Naive thymus-derived CD4-positive, alpha-beta T cell (primary cell): ENCODE measurements at regions of chr7 and their contacts with region 1.

Region 1: DNA sequence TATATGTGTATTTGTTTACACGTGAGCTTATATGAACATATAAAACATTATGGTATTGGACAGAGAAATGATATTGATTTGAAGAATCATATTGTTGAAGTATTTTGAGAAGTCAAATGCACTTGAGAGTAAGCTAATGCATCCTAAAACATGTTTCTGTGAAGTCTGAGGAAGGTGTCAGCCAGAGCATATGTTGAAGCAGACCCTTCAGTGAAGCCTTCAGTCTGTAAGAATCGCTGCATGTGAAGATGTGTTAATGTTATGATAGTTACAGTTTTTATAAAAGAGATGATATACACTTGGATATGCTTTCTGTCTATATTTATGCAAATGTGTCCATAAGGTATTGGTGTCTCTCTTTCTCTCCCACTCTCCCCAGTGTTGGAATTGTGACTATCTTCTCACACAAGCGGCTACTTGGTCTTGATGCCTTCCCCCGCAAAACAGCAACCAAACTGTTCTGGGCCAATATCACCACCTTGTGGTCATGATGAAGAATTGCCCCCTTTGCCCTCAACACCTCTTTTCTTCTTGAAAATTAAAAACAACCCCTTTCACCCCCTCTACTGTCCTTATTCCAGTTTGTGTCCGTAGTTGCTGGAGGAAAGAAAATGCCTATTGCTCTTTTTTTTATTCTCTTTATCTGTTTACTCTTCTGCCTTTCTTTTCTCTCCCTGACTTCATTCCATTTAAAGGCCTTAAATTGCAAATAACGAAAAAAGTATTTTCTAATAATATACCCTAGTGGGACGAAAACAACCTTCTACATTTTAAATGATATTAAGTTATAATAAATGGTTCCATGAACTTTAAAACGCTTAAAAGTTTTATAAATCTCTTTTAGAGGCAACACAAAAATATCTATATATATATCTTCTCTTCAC is 64.9 kb downstream of the IKZF1 start:
- DNase-seq: peak in 7 of 9 donors; percentile 72 to 86 (median 81)
- ATAC-seq: peak; percentile 84
- H3K4me3 ChIP-seq: peak overlapping the region; percentile 15
- H3K4me3 Mint-ChIP-seq: peak overlapping the region; percentile 8 to 89 (median 60)
- H3K27ac ChIP-seq: peak overlapping the region; percentile 94
- H3K27ac Mint-ChIP-seq: peak overlapping the region in 6 of 9 donors; percentile 80 to 100 (median 98)
- H3K4me1 ChIP-seq: peaks cover 84 to 96% of the 10 kb centered on the region in 2 donors
- H3K4me1 Mint-ChIP-seq: peaks cover 63 to 99% (median 96%) of the 10 kb centered on the region in 7 donors
- H3K27me3 ChIP-seq: no peaks in the 10 kb centered on the region
- H3K27me3 Mint-ChIP-seq: no peaks in the 10 kb centered on the region

Region 2: GRCh38 chr7:50147951-50148808 is 221.2 kb before region 1 on chr7:
- CTCF ChIA-PET with region 1: interaction called, 11 read pairs
- POLR2A ChIA-PET with region 1: interaction called, 7 read pairs
- intact Hi-C with region 1: loop called in 1 of 2 experiments (anchors 1 kb)
- DNase-seq: peak in 7 of 9 donors; percentile 52 to 83 (median 71)
- ATAC-seq: peak; percentile 91
- H3K4me3 ChIP-seq: no peak overlapping the region
- H3K4me3 Mint-ChIP-seq: peak overlapping the region in 8 of 10 donors; percentile 21 to 60 (median 48)
- H3K27ac ChIP-seq: peak overlapping the region; percentile 72
- H3K27ac Mint-ChIP-seq: peak overlapping the region; percentile 57 to 97 (median 87)
- H3K4me1 ChIP-seq: peaks cover 3 to 14% of the 10 kb centered on the region in 2 donors
- H3K4me1 Mint-ChIP-seq: peaks cover 18 to 63% (median 40%) of the 10 kb centered on the region in 7 donors
- H3K27me3 ChIP-seq: no peaks in the 10 kb centered on the region
- H3K27me3 Mint-ChIP-seq: no peaks in the 10 kb centered on the region

Region 3: GRCh38 chr7:50304158-50304910 is 65.1 kb before region 1 on chr7 and contains the start of gene IKZF1:
- CTCF ChIA-PET with region 1: interaction called, 210 read pairs
- POLR2A ChIA-PET with region 1: interaction called, 2,368 read pairs
- intact Hi-C with region 1: loop called (anchors 1 kb)
- DNase-seq: peak; percentile 38 to 75 (median 58)
- ATAC-seq: peak; percentile 54
- H3K4me3 ChIP-seq: peak within 1 kb of the TSS; percentile 84
- H3K4me3 Mint-ChIP-seq: peak within 1 kb of the TSS; percentile 93 to 100 (median 99)
- H3K27ac ChIP-seq: peak within 1 kb of the TSS; percentile 90
- H3K27ac Mint-ChIP-seq: peak within 1 kb of the TSS; percentile 91 to 100 (median 98)
- H3K4me1 ChIP-seq: peaks cover 13 to 33% of the 10 kb centered on the region in 2 donors
- H3K4me1 Mint-ChIP-seq: peaks cover 37 to 57% (median 53%) of the 10 kb centered on the region in 7 donors
- H3K27me3 ChIP-seq: no peaks in the 10 kb centered on the region
- H3K27me3 Mint-ChIP-seq: peaks cover 0 to 2% (median 0%) of the 10 kb centered on the region in 5 donors
- total RNA-seq, gene IKZF1: 388 to 548 (median 463) TPM

Region 4: DNA sequence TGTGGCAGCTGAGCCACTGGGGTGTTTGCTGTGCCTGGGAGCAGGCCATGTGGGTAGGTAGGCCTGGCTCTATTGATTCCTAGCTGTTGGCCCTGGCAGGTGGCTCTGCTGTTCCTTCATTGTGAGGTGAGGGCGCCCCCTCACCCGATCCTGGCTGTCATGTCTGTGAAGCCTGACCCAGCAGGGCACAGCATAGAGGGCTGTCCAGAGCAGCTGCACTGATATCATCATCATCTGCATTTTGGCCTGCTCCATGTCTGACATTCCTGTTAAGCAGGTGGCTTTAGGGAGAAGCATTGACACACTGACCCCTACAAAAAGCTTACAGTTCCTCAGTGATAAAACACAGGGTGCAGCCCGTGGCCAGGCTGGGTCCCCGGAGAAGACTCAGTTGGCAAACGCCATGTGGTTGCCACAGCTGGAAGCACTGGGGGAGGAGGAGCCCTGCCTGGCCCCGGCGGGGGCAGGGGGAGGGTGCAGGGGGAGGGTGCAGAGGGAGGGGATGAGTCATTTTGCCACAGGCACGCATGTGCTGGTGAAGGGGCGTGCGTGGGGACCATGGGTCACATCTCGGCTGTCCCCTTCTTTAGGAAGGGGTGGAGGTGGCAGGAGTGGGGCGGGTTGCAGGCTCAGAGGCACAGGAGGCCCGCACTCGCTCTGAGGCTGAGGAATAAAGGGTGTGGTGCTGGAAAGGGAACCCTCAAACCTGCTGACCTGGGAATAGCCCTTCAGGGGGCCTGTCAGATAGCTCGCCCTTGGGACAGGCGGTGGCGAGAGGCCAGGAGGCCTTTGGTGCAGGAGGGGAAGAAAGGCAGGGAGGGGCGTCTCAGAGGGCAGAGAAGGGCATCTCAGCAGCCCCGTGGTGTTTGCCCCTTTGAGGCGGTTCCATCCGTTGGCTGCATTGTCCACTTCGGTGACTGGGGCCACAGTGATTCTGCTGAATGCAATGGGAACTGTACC is 33.3 kb before region 1 on chr7:
- CTCF ChIA-PET with region 1: interaction called, 9 read pairs
- POLR2A ChIA-PET with region 1: interaction called, 2,368 read pairs
- intact Hi-C with region 1: loop called (anchors 1 to 2 kb)
- DNase-seq: peak in 6 of 9 donors; percentile 54 to 86 (median 60)
- ATAC-seq: peak; percentile 62
- H3K4me3 ChIP-seq: peak overlapping the region; percentile 29
- H3K4me3 Mint-ChIP-seq: peak overlapping the region in 1 of 10 donors; percentile 90
- H3K27ac ChIP-seq: peak overlapping the region; percentile 93
- H3K27ac Mint-ChIP-seq: no peak overlapping the region
- H3K4me1 ChIP-seq: peaks cover 99% of the 10 kb centered on the region in 2 donors
- H3K4me1 Mint-ChIP-seq: peaks cover 0 to 68% (median 17%) of the 10 kb centered on the region in 7 donors
- H3K27me3 ChIP-seq: no peaks in the 10 kb centered on the region
- H3K27me3 Mint-ChIP-seq: no peaks in the 10 kb centered on the region

Region 5: GRCh38 chr7:50418086-50418515 is 48.7 kb after region 1 on chr7:
- CTCF ChIA-PET with region 1: interaction called, 27 read pairs
- POLR2A ChIA-PET with region 1: interaction called, 4 read pairs
- intact Hi-C with region 1: loop called (anchors 1 to 2 kb)
- DNase-seq: peak; percentile 31 to 68 (median 56)
- ATAC-seq: peak; percentile 91
- H3K4me3 ChIP-seq: no peak overlapping the region
- H3K4me3 Mint-ChIP-seq: no peak overlapping the region
- H3K27ac ChIP-seq: no peak overlapping the region
- H3K27ac Mint-ChIP-seq: peak overlapping the region in 1 of 9 donors; percentile 26
- H3K4me1 ChIP-seq: peaks cover 0 to 22% of the 10 kb centered on the region in 2 donors
- H3K4me1 Mint-ChIP-seq: peaks cover 5 to 35% (median 29%) of the 10 kb centered on the region in 7 donors
- H3K27me3 ChIP-seq: no peaks in the 10 kb centered on the region
- H3K27me3 Mint-ChIP-seq: no peaks in the 10 kb centered on the region